HEK293T (cell line): ENCODE measurements at regions of chr1 and their contacts with region 1.

Region 1: GRCh38 chr1:202304375-202304774 is 37.4 kb downstream of the UBE2T start:
- DNase-seq: no peak

Region 2: GRCh38 chr1:202291961-202292712 is 12.2 kb before region 1 on chr1:
- CTCF ChIA-PET with region 1: no interaction called
- POLR2A ChIA-PET with region 1: no interaction called
- DNase-seq: no peak

Region 3: GRCh38 chr1:202315576-202316168 is 11.3 kb after region 1 on chr1:
- CTCF ChIA-PET with region 1: interaction called, 12 read pairs
- POLR2A ChIA-PET with region 1: no interaction called
- DNase-seq: peak; percentile 88